ENCODE measurements at regions of chr21 and their contacts with region 1.

Region 1: GRCh38 chr21:29298348-29299045 is at the start of gene BACH1:
- DNase-seq: peak; percentile 88 to 89
- H3K4me3 ChIP-seq: peak within 1 kb of the TSS; percentile 16 to 86 (median 48)
- H3K27ac ChIP-seq: peak within 1 kb of the TSS; percentile 69 to 93 (median 87)
- H3K4me1 ChIP-seq: peaks cover 36 to 38% of the 10 kb centered on the region in 2 donors
- H3K27me3 ChIP-seq: no peaks in the 10 kb centered on the region
- CTCF ChIP-seq: peak in 2 of 6 experiments; percentile 31 to 49
- POLR2A ChIP-seq: peak; percentile 85 to 87
- total RNA-seq, gene BACH1: 36.3 to 89.9 (median 64.9) TPM

Region 2: DNA sequence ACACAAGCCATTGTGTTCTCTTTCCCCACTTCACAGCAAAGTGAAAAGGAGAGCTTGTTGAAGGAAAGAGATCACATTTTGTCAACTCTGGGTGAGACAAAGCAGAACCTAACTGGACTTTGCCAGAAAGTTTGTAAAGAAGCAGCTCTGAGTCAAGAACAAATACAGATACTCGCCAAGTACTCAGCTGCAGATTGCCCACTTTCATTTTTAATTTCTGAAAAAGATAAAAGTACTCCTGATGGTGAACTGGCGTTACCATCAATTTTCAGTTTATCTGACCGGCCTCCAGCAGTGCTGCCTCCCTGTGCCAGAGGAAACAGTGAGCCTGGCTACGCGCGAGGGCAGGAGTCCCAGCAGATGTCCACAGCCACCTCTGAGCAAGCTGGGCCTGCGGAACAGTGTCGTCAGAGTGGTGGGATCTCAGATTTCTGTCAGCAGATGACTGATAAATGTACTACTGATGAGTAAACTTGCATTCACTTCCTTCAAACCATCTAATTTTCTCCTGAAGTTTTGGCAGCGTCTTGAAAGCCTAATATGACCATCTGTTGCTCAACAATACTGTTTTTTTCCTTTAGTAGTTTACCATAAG is 44.0 kb after region 1 on chr21:
- intact Hi-C with region 1: loop called (anchors 10 kb)
- DNase-seq: peak in 1 of 2 donors; percentile 5
- H3K4me3 ChIP-seq: no peak overlapping the region
- H3K27ac ChIP-seq: peak overlapping the region in 2 of 3 donors; percentile 13 to 17
- H3K4me1 ChIP-seq: peaks cover 0 to 23% of the 10 kb centered on the region in 2 donors
- H3K27me3 ChIP-seq: no peaks in the 10 kb centered on the region
- CTCF ChIP-seq: no peak
- POLR2A ChIP-seq: no peak